Activated B cell treated with CpG ODN at 0.5 μM for 24 hours (primary cell): ENCODE measurements at regions of chr10 and their contacts with region 1.

Region 1: DNA sequence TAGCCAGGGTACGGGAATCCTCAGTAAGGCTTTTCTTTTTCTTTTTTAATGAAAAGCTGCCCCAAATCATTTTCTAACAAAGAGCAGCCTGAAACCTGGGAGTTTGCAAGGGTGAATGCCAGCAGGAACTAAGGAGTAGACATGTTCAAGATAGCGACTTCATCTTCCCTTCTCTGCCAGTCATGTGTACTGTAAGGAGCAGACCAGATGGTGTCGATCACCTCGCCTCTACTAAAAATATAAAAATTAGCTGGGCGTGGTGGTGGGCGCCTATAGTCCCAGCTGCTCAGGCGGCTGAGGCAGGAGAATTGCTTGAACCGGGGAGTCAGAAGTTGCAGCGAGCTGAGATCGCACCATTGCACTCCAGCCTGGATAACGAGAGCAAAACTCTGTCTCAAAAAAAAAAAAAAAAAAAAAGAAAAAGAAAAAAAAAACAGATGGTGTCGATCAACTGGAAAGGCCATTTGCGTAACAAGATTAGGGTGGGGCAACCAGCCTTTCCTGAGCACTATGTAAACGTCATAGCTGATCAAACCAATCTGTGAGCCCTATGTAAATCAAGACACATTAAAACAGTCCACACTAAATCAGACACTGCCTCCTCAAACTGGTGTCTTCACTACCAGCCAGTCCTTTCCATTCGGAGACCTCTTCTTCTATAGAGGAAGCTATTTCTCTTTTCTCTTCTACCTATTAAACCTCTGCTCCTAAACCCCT is 33.8 kb downstream of the NOLC1 start:
- DNase-seq: no peak
- ATAC-seq: peak; percentile 40
- H3K4me3 Mint-ChIP-seq: no peak overlapping the region
- H3K27ac Mint-ChIP-seq: no peak overlapping the region
- H3K4me1 Mint-ChIP-seq: peaks cover 16% of the 10 kb centered on the region
- H3K27me3 Mint-ChIP-seq: peaks cover 1% of the 10 kb centered on the region
- CTCF ChIP-seq: no peak

Region 2: GRCh38 chr10:102342958-102343357 is 157.0 kb after region 1 on chr10:
- CTCF ChIA-PET with region 1: no interaction called
- POLR2A ChIA-PET with region 1: interaction called, 10 read pairs
- intact Hi-C with region 1: no loop called
- DNase-seq: no peak
- ATAC-seq: no peak
- H3K4me3 Mint-ChIP-seq: no peak overlapping the region
- H3K27ac Mint-ChIP-seq: no peak overlapping the region
- H3K4me1 Mint-ChIP-seq: no peaks in the 10 kb centered on the region
- H3K27me3 Mint-ChIP-seq: no peaks in the 10 kb centered on the region
- CTCF ChIP-seq: no peak

Region 3: GRCh38 chr10:103278862-103279298 is 1092.9 kb after region 1 on chr10:
- CTCF ChIA-PET with region 1: no interaction called
- POLR2A ChIA-PET with region 1: no interaction called
- intact Hi-C with region 1: no loop called
- DNase-seq: peak; percentile 21
- ATAC-seq: no peak
- H3K4me3 Mint-ChIP-seq: no peak overlapping the region
- H3K27ac Mint-ChIP-seq: no peak overlapping the region
- H3K4me1 Mint-ChIP-seq: peaks cover 8% of the 10 kb centered on the region
- H3K27me3 Mint-ChIP-seq: peaks cover 63% of the 10 kb centered on the region
- CTCF ChIP-seq: no peak